Endothelial cell of umbilical vein (primary cell): ENCODE measurements at regions of chr20 and their contacts with region 1.

Region 1: GRCh38 chr20:22974353-22974752 is 60.8 kb upstream of the SSTR4 start:
- DNase-seq: peak; percentile 28
- H3K4me3 ChIP-seq: no peak overlapping the region
- H3K27ac ChIP-seq: no peak overlapping the region
- H3K4me1 ChIP-seq: no peaks in the 10 kb centered on the region
- H3K27me3 ChIP-seq: peaks cover 4 to 11% of the 10 kb centered on the region in 2 experiments
- CTCF ChIP-seq: peak; percentile 60 to 64
- POLR2A ChIP-seq: no peak

Region 2: GRCh38 chr20:22716821-22717351 is 257.5 kb before region 1 on chr20:
- CTCF ChIA-PET with region 1: interaction called, 18 read pairs
- POLR2A ChIA-PET with region 1: no interaction called
- dilution Hi-C with region 1: no loop called
- intact Hi-C with region 1: no loop called
- DNase-seq: peak; percentile 68
- H3K4me3 ChIP-seq: no peak overlapping the region
- H3K27ac ChIP-seq: peak overlapping the region; percentile 59
- H3K4me1 ChIP-seq: peaks cover 39% of the 10 kb centered on the region
- H3K27me3 ChIP-seq: no peaks in the 10 kb centered on the region
- CTCF ChIP-seq: no peak
- POLR2A ChIP-seq: no peak

Region 3: GRCh38 chr20:22729180-22729579 is 245.2 kb before region 1 on chr20:
- CTCF ChIA-PET with region 1: interaction called, 38 read pairs
- POLR2A ChIA-PET with region 1: no interaction called
- dilution Hi-C with region 1: no loop called
- intact Hi-C with region 1: no loop called
- DNase-seq: peak; percentile 16
- H3K4me3 ChIP-seq: no peak overlapping the region
- H3K27ac ChIP-seq: no peak overlapping the region
- H3K4me1 ChIP-seq: peaks cover 6% of the 10 kb centered on the region
- H3K27me3 ChIP-seq: no peaks in the 10 kb centered on the region
- CTCF ChIP-seq: no peak
- POLR2A ChIP-seq: no peak

Region 4: GRCh38 chr20:22861990-22862389 is 112.4 kb before region 1 on chr20:
- CTCF ChIA-PET with region 1: interaction called, 16 read pairs
- POLR2A ChIA-PET with region 1: no interaction called
- dilution Hi-C with region 1: no loop called
- intact Hi-C with region 1: no loop called
- DNase-seq: peak; percentile 74
- H3K4me3 ChIP-seq: no peak overlapping the region
- H3K27ac ChIP-seq: peak overlapping the region; percentile 78
- H3K4me1 ChIP-seq: peaks cover 33% of the 10 kb centered on the region
- H3K27me3 ChIP-seq: no peaks in the 10 kb centered on the region
- CTCF ChIP-seq: no peak
- POLR2A ChIP-seq: peak; percentile 47

Region 5: DNA sequence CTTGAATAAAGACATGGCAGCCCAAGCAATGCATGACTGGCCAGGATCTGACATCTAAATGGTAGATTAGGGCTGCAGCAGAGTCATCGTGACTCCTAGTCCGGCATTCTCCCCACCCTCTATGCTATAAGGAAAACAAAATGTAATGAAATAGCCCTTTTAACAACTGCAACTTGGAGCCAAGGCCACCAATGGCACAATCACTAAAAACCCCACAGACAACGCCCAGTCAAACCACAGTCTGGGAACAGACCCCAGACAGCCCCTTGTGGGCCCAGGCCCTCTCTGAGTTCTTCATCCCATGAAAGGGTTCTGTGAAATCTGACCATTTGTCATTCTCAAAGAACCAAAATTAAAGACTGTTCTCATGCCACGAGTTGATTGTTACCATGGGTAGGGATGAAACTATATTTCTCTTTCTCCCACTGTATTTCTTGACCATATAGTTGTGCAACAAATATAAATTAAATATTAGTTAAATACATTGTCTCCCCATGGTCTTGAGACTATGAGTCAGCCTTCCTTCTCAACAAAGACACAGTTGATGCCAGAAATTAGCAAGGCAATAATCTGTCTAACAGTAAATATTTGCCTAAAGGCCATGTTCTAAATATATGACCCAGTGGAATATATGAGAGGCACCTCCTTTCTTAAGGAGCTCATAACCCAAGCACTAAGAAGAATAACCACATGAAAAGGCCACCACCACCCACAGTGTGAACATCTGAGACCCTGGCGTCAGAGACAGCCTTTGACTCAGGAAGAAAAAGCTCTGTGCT is 24.8 kb before region 1 on chr20:
- CTCF ChIA-PET with region 1: interaction called, 15 read pairs
- POLR2A ChIA-PET with region 1: no interaction called
- dilution Hi-C with region 1: no loop called
- intact Hi-C with region 1: no loop called
- DNase-seq: peak; percentile 35
- H3K4me3 ChIP-seq: no peak overlapping the region
- H3K27ac ChIP-seq: no peak overlapping the region
- H3K4me1 ChIP-seq: no peaks in the 10 kb centered on the region
- H3K27me3 ChIP-seq: peaks cover 0 to 5% of the 10 kb centered on the region in 2 experiments
- CTCF ChIP-seq: no peak
- POLR2A ChIP-seq: no peak

Region 6: GRCh38 chr20:23052904-23053303 is 78.6 kb after region 1 on chr20:
- CTCF ChIA-PET with region 1: no interaction called
- POLR2A ChIA-PET with region 1: no interaction called
- dilution Hi-C with region 1: no loop called
- intact Hi-C with region 1: no loop called
- DNase-seq: no peak
- H3K4me3 ChIP-seq: no peak overlapping the region
- H3K27ac ChIP-seq: no peak overlapping the region
- H3K4me1 ChIP-seq: peaks cover 13% of the 10 kb centered on the region
- H3K27me3 ChIP-seq: no peaks in the 10 kb centered on the region
- CTCF ChIP-seq: no peak
- POLR2A ChIP-seq: no peak

Region 7: DNA sequence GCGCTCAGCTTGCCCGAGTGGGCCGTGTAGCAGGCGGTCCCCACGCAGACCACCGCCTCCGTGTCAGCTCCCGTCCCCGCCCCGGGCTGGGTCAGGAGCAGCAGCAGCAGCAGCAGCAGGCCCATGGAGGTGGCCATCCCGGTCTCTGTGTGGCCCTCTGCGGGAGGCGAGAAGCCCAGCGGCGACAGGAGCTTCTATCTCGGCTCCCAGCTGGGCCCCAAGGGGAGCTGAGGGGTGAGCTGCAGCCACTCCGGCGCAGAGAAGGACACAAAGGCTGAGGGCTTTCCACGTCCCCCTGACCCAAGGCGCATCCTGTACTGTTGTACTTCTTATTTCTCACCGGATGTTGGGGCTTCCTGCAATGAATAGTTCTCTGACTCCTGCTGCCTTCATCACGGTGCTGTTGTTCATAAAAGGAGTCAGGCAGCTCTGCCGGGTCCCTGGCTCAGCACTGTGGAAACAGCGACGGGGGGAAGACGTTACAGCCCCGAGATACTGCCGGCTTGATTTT is 111.8 kb after region 1 on chr20 and contains the start of gene CD93:
- CTCF ChIA-PET with region 1: no interaction called
- POLR2A ChIA-PET with region 1: no interaction called
- dilution Hi-C with region 1: no loop called
- intact Hi-C with region 1: no loop called
- DNase-seq: peak; percentile 95
- H3K4me3 ChIP-seq: peak within 1 kb of the TSS; percentile 30 to 93 (median 82)
- H3K27ac ChIP-seq: peak within 1 kb of the TSS; percentile 98
- H3K4me1 ChIP-seq: peaks cover 53% of the 10 kb centered on the region
- H3K27me3 ChIP-seq: no peaks in the 10 kb centered on the region
- CTCF ChIP-seq: peak in 1 of 2 donors; percentile 14
- POLR2A ChIP-seq: peak; percentile 68
- total RNA-seq, gene CD93: 346 and 413 TPM in 2 replicates

Region 8: GRCh38 chr20:23099791-23100698 is 125.7 kb after region 1 on chr20:
- CTCF ChIA-PET with region 1: no interaction called
- POLR2A ChIA-PET with region 1: no interaction called
- dilution Hi-C with region 1: no loop called
- intact Hi-C with region 1: no loop called
- DNase-seq: no peak
- H3K4me3 ChIP-seq: no peak overlapping the region
- H3K27ac ChIP-seq: no peak overlapping the region
- H3K4me1 ChIP-seq: peaks cover 35% of the 10 kb centered on the region
- H3K27me3 ChIP-seq: no peaks in the 10 kb centered on the region
- CTCF ChIP-seq: no peak
- POLR2A ChIP-seq: no peak

Region 9: DNA sequence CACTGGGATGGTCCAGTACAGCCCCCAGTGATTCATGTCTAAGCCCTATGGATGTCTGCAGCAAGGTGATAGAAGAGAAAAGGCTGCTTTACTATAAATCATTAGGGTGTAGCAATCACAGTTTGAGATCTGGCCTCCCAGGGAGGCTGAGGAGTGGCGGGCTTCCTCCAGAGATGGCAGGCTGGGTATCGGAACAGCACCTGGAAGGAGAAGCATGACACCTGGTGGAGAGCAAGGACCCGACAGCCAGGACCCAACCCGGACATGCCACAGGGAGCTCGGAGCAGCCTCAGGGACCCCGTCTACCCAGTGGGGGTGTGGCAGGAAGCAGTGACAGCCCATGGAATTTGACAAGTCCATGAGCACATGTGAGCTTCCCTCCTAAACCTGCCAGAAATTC is 226.6 kb after region 1 on chr20:
- CTCF ChIA-PET with region 1: interaction called, 10 read pairs
- POLR2A ChIA-PET with region 1: no interaction called
- dilution Hi-C with region 1: no loop called
- intact Hi-C with region 1: no loop called
- DNase-seq: no peak
- H3K4me3 ChIP-seq: no peak overlapping the region
- H3K27ac ChIP-seq: no peak overlapping the region
- H3K4me1 ChIP-seq: no peaks in the 10 kb centered on the region
- H3K27me3 ChIP-seq: no peaks in the 10 kb centered on the region
- CTCF ChIP-seq: peak; percentile 42 to 54
- POLR2A ChIP-seq: no peak